ENCODE measurements at regions of chr7 and their contacts with region 1.

Region 1: DNA sequence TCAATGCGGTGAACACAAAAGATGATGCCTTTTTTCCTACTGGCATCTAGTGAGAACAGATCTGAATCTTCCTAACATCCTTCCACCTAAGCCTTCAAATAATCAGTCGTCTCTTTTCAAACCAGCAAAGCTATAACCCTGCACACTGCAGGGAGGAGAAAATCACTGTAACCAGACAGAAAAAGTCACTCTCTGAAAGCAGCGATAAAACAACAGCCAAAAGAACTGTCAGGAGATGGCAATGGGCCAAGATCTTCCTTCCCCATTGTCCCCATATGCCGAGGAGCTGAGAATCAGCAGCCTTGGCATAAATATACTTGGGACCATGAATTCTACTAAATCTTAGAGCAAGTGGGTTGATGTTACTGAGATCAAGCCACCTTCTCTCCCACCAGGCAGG is 13.1 kb downstream of the FZD9 start:
- DNase-seq: no peak
- ATAC-seq: no peak
- H3K4me3 ChIP-seq: no peak overlapping the region
- H3K27ac ChIP-seq: no peak overlapping the region
- H3K4me1 ChIP-seq: peaks cover 0 to 8% (median 0%) of the 10 kb centered on the region in 12 donors
- H3K27me3 ChIP-seq: no peaks in the 10 kb centered on the region
- CTCF ChIP-seq: no peak
- POLR2A ChIP-seq: no peak

Region 2: DNA sequence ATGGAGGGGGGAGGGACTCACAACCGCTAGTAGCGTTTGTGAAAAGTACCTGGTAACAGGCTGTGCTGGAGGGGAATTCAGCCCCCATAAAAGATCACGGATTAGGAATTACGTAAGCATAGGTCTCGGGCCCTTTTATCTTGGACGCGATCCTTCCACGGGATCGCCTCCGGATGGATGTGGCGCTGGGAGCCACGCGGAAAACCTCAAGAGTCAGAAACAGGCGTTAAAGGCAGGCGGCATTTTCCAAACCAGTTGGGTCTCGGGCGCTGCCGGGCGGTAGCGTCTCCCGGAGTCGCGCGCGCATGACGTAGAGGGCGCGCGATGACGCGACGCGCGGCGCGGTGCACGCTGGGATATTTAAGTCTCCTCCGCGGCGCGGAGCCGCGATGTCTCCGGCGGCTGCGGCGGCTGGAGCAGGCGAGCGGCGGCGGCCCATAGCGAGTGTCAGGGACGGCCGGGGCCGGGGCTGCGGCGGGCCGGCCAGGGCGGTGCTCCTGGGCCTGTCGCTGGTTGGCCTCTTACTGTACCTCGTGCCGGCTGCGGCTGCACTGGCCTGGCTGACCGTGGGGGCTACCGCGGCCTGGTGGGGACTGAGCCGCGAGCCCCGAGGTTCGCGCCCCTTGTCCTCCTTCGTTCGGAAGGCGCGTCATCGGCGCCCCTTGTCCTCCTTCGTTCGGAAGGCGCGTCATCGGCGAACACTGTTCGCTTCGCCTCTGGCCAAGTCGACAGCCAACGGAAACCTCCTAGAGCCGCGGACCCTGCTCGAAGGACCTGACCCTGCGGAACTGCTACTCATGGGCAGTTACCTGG is 521.7 kb before region 1 on chr7 and contains the start of gene POM121:
- intact Hi-C with region 1: loop called in 1 of 10 experiments (anchors 10 kb)
- DNase-seq: peak; percentile 75 to 89 (median 86)
- ATAC-seq: peak; percentile 85 to 98 (median 97)
- H3K4me3 ChIP-seq: peak within 1 kb of the TSS; percentile 63 to 96 (median 90)
- H3K27ac ChIP-seq: peak within 1 kb of the TSS; percentile 68 to 95 (median 90)
- H3K4me1 ChIP-seq: peaks cover 0 to 22% (median 16%) of the 10 kb centered on the region in 12 donors
- H3K27me3 ChIP-seq: no peaks in the 10 kb centered on the region
- CTCF ChIP-seq: no peak
- POLR2A ChIP-seq: peak in 1 of 2 donors; percentile 76
- total RNA-seq, gene POM121: 10.9 to 23.2 (median 16.1) TPM

Region 3: GRCh38 chr7:73364006-73364728 is 82.5 kb before region 1 on chr7:
- intact Hi-C with region 1: no loop called
- DNase-seq: no peak
- ATAC-seq: peak in 3 of 4 donors; percentile 38 to 58 (median 51)
- H3K4me3 ChIP-seq: no peak overlapping the region
- H3K27ac ChIP-seq: no peak overlapping the region
- H3K4me1 ChIP-seq: no peaks in the 10 kb centered on the region
- H3K27me3 ChIP-seq: no peaks in the 10 kb centered on the region
- CTCF ChIP-seq: no peak
- POLR2A ChIP-seq: no peak

Measured in heart left ventricle (tissue), 16 donors.